Activated CD4-positive, alpha-beta memory T cell treated with anti-CD3 and anti-CD28 coated beads, Interleukin-2, amount 10 ng/mL, durations not matched to agents 7 days and 5 days (primary cell): ENCODE measurements at regions of chr1 and their contacts with region 1.

Region 1: GRCh38 chr1:86499987-86500593 is 31.4 kb downstream of the CLCA1 start:
- DNase-seq: no peak
- H3K4me3 Mint-ChIP-seq: no peak overlapping the region
- H3K27ac Mint-ChIP-seq: no peak overlapping the region
- H3K4me1 Mint-ChIP-seq: peaks cover 17% of the 10 kb centered on the region
- H3K27me3 Mint-ChIP-seq: peaks cover 15% of the 10 kb centered on the region

Region 2: DNA sequence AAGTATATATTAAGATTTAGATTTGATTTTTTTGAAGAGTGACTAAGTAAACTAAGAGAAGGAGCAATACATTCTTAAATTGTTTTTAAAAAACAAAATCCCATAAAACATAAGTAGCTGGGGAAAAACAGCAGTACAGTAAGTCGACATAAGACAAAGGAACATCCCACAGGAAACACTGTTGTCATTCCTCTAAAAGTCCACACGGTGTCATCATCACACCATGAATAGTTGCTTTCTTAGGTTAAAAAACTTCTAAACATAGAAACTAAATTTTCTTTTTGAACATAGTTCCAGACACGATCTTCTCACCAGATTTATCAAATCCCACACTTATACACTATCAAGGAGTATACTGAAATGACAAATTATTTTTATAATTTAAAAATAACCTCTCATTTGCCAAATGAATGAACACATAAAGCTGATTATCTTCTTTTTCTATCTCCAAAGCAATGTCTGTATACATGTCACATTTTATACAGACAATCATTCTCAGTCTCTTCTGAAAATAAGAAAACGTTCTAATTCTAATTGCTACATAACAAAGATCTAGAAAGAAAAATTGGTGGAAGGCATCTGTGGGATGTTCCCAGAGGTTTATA is 119.7 kb before region 1 on chr1:
- CTCF ChIA-PET with region 1: interaction called, 32 read pairs
- POLR2A ChIA-PET with region 1: no interaction called
- DNase-seq: no peak
- H3K4me3 Mint-ChIP-seq: no peak overlapping the region
- H3K27ac Mint-ChIP-seq: no peak overlapping the region
- H3K4me1 Mint-ChIP-seq: peaks cover 17% of the 10 kb centered on the region
- H3K27me3 Mint-ChIP-seq: no peaks in the 10 kb centered on the region

Region 3: DNA sequence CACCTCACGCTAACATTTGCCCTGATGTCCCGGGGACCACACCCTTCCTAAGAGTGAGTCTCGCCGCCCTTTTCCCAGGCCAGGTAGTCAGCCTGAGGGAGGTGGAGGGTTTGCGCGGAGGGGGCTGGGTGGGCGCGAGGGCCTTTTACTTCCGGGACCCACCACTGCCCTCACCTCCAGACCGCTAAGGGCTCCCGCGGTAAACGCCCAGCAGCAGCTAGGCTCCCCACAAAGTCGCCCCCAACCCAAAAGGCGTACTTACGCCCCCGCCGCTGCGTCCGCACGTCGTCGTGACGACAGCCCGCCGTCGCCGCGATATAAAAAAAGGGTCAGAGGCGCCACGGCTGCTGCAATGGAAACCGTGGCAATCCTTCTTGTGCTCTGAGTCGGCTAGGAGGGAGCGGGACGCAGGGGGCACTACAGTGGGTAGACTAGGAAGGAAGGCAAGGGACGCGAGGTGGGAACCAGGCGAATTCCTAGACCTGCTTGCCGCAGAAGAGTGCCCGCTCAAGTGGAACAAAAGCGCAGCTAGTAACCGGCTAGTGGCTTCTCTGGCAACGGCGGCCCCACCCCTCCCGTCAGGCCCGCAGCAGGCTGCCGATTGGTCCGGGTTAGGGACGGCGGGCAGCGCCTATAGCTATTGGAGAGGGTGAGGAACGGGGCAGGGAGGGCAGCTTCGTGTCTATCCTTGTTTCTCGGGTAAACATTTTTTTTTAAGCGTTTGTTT is 104.2 kb before region 1 on chr1 and contains the start of gene ODF2L:
- CTCF ChIA-PET with region 1: interaction called, 15 read pairs
- POLR2A ChIA-PET with region 1: interaction called, 3 read pairs
- DNase-seq: peak; percentile 94
- H3K4me3 Mint-ChIP-seq: peak within 1 kb of the TSS; percentile 95
- H3K27ac Mint-ChIP-seq: peak within 1 kb of the TSS; percentile 90
- H3K4me1 Mint-ChIP-seq: peaks cover 53% of the 10 kb centered on the region
- H3K27me3 Mint-ChIP-seq: no peaks in the 10 kb centered on the region
- total RNA-seq, gene ODF2L: 63.1 to 71.3 TPM

Region 4: GRCh38 chr1:86421601-86422280 is 78.3 kb before region 1 on chr1:
- CTCF ChIA-PET with region 1: interaction called, 22 read pairs
- POLR2A ChIA-PET with region 1: no interaction called
- DNase-seq: no peak
- H3K4me3 Mint-ChIP-seq: no peak overlapping the region
- H3K27ac Mint-ChIP-seq: no peak overlapping the region
- H3K4me1 Mint-ChIP-seq: peaks cover 5% of the 10 kb centered on the region
- H3K27me3 Mint-ChIP-seq: peaks cover 3% of the 10 kb centered on the region

Region 5: GRCh38 chr1:86470859-86471258 is 29.2 kb before region 1 on chr1:
- CTCF ChIA-PET with region 1: interaction called, 15 read pairs
- POLR2A ChIA-PET with region 1: no interaction called
- DNase-seq: no peak
- H3K4me3 Mint-ChIP-seq: no peak overlapping the region
- H3K27ac Mint-ChIP-seq: no peak overlapping the region
- H3K4me1 Mint-ChIP-seq: no peaks in the 10 kb centered on the region
- H3K27me3 Mint-ChIP-seq: peaks cover 18% of the 10 kb centered on the region

Region 6: GRCh38 chr1:86741947-86742572 is 242.0 kb after region 1 on chr1:
- CTCF ChIA-PET with region 1: interaction called, 10 read pairs
- POLR2A ChIA-PET with region 1: no interaction called
- DNase-seq: peak; percentile 28
- H3K4me3 Mint-ChIP-seq: no peak overlapping the region
- H3K27ac Mint-ChIP-seq: no peak overlapping the region
- H3K4me1 Mint-ChIP-seq: peaks cover 4% of the 10 kb centered on the region
- H3K27me3 Mint-ChIP-seq: no peaks in the 10 kb centered on the region